ENCODE measurements at regions of chr5 and their contacts with region 1.

Region 1: DNA sequence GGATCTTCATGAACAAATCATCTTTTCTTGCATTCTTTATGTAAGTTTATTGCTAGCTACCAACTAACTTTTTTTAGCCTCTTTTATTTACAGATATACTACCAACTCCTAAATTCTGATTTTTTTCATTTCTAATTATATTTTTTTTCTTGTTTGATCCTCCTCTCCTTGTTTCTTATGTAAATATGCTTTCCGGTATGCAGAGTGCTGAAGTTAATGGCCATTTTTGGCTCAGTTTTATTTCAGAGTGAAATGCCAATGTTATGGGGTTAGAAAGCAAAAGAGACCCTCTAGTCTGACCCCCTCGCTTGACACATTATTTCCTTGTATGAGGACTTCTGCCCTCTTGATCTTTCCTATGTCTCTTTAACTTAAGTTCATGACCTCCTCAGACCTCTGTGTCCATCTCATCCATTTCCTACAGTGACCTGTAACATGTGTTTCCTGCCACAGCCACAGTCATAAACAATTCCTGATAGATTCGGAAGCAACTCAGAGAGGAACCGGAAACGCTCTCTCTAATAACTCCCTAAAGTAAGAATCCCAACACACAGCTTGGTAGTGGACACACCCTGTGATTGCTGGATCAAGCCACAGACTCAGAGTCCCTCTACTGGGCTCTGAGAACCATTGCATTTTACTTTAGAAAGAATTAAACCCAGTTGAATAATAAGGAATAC is 42.9 kb upstream of the AFAP1L1 start:
- DNase-seq: no peak
- ATAC-seq: peak; percentile 89 to 98 (median 95)
- H3K4me3 ChIP-seq: no peak overlapping the region
- H3K27ac ChIP-seq: peak overlapping the region; percentile 33
- H3K4me1 ChIP-seq: peaks cover 5% of the 10 kb centered on the region
- H3K27me3 ChIP-seq: no peaks in the 10 kb centered on the region
- CTCF ChIP-seq: peak; percentile 86

Region 2: GRCh38 chr5:148984333-148984732 is 244.4 kb before region 1 on chr5:
- intact Hi-C with region 1: loop called in 1 of 2 experiments (anchors 10 kb)
- DNase-seq: no peak
- ATAC-seq: no peak
- H3K4me3 ChIP-seq: no peak overlapping the region
- H3K27ac ChIP-seq: no peak overlapping the region
- H3K4me1 ChIP-seq: peaks cover 14% of the 10 kb centered on the region
- H3K27me3 ChIP-seq: no peaks in the 10 kb centered on the region
- CTCF ChIP-seq: no peak

Region 3: DNA sequence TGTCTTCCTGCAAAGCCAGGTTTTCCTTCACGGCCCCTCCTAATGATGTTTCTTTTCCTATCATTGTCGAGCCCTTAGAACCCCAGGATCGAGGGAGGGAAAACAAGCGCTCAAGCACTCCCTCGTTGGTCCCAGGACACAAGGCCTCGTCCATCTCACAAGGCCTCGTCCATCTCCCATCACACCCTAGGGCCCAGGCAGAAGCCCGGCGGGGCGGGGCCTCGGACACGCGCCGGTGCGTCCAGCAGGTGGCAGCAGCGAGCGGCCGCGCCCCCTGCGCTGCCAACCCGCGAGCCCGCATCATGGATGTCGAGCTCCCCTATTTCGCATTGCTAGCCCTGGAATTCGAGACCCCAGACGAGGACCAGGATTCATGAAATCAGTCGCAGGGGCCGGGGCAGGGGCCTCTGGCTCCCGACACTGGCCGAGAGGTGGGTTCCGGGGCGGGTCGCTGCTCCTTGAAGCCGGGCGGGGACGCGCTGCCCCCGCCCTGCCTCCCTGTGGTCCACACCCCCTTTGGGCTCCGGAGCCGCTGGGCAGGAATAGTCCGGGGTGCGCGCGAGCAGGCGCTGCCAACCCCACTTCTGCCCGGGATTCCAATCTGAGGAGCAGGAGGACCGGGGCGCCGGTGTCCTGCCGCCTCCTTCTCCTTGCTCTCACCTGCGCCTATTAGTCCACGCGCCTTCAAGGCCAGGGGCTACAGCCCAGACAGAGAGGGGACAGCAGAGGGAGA is 87.4 kb before region 1 on chr5 and contains the start of gene ABLIM3:
- intact Hi-C with region 1: loop called (anchors 1 kb)
- DNase-seq: peak; percentile 74 to 85
- ATAC-seq: peak; percentile 91 to 95 (median 94)
- H3K4me3 ChIP-seq: peak within 1 kb of the TSS; percentile 75
- H3K27ac ChIP-seq: peak within 1 kb of the TSS; percentile 79
- H3K4me1 ChIP-seq: peaks cover 29% of the 10 kb centered on the region
- H3K27me3 ChIP-seq: no peaks in the 10 kb centered on the region
- CTCF ChIP-seq: peak; percentile 97
- total RNA-seq, gene ABLIM3: 34.3 to 54.5 (median 42.8) TPM

Measured in psoas muscle (tissue), 8 donors.